Testis (tissue), 5 donors: ENCODE measurements at regions of chr9 and their contacts with region 1.

Region 1: GRCh38 chr9:135969064-135969683 is 8.0 kb upstream of the UBAC1 start:
- DNase-seq: no peak
- H3K4me3 ChIP-seq: no peak overlapping the region
- H3K27ac ChIP-seq: no peak overlapping the region
- H3K4me1 ChIP-seq: peaks cover 7% of the 10 kb centered on the region
- H3K27me3 ChIP-seq: no peaks in the 10 kb centered on the region
- CTCF ChIP-seq: no peak
- POLR2A ChIP-seq: no peak

Region 2: DNA sequence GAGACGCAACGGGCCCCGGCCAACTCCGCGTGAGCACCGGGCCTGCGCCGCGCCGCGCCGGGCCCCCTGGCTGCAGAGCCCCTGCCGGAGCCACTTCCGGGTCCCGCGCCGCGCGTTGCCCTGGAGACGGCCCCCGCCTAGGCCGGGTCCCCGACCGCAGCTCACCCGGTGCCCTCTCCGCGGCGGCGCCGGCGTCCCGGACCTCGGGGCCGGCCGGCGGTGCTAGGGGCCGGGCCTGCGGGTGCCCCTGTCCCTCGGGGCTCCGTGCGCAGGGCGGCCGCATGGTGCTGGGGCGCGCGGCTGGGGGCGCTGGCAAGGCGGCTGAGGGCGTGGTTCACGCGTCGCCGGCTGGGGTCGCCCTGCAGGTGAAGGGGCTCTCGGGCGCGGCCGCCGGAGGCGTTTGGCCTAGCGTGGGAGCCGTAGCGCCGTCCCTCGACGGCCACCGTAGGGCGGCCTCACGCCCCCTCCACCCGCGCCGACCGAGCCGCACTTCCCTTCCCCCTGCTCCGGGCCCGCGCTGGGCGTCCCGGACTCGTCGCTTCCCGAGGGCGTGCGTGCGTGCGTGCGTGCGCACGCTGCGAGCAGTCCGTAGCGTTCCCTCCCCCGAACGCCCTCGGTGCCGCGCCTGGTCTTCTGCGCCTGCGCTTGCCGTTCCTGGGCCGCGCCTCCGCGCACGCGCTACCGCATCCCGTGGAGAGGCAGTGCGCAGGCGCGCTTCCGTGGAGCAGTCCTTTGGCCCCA is 149.3 kb after region 1 on chr9 and contains the start of gene TMEM250:
- intact Hi-C with region 1: loop called (anchors 5 kb)
- DNase-seq: peak; percentile 94
- H3K4me3 ChIP-seq: peak within 1 kb of the TSS; percentile 80 to 86
- H3K27ac ChIP-seq: peak within 1 kb of the TSS; percentile 84 to 96
- H3K4me1 ChIP-seq: peaks cover 21% of the 10 kb centered on the region
- H3K27me3 ChIP-seq: no peaks in the 10 kb centered on the region
- CTCF ChIP-seq: peak in 1 of 3 experiments; percentile 31
- POLR2A ChIP-seq: no peak
- total RNA-seq, gene TMEM250: 57.8 to 73.0 TPM